ENCODE measurements at regions of chr7 and their contacts with region 1.

Region 1: DNA sequence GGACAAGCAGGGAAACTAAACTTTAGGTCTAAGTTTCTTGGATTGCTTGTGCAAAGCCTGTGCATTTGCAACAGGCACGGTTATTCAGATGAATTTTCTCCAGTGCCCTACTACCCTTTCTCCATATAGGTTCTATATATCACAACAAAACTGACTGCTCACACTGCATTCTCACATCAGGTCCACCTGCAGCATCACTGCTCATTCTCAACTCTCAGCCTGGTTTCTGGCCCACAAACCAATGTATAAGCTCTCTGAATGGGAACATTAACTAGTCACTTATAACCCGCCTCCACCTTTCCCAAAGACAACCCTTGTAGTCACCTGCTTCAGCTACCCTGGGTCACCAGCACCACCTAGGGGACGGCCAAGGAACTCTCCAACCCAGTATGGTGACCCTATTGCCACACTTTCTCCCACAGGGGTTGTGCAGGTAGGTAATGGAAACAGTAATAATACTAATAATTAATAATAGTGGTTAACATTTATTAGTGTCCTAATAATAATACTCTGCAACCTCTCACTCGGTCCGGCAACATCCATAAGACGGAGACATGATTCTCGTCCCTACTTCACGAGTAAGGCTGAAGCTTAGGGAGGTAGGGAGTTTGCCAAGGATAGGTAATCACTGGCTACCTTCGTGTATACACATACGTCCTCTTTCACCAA is 97.3 kb downstream of the CLEC2L start:
- DNase-seq: peak; percentile 41
- H3K4me3 ChIP-seq: no peak overlapping the region
- H3K27ac ChIP-seq: no peak overlapping the region
- H3K4me1 ChIP-seq: no peaks in the 10 kb centered on the region
- CTCF ChIP-seq: peak; percentile 87

Region 2: GRCh38 chr7:138603549-138604318 is 1017.1 kb before region 1 on chr7:
- CTCF ChIA-PET with region 1: no interaction called
- POLR2A ChIA-PET with region 1: no interaction called
- intact Hi-C with region 1: no loop called
- DNase-seq: no peak
- H3K4me3 ChIP-seq: no peak overlapping the region
- H3K27ac ChIP-seq: no peak overlapping the region
- H3K4me1 ChIP-seq: no peaks in the 10 kb centered on the region
- CTCF ChIP-seq: no peak

Region 3: DNA sequence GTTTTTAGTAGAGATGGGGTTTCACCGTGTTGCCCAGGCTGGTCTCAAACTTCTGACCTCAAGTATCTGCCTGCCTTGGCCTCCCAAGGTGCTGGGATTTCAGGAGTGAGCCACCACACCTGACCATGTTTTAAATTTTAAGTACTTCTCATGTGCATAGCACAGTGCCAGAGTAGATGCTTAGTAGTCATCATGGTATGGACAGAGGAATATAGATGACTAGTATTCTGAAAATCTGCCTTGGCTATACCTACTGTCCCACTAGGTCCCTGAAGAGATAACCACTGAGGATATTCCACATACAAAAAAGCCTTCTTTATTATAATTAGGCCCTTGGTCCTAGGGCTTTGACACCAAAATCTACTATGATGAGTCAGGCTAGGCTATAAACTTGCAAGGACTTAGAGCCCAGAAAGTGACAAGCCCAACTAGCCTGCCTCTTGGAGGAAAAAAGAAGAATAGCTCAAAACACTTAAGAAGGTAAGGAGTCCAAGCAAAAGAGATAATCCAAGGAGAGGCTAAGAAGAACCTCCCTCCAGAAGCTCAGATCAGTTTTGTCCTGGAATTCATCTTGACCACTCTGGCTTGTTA is 227.1 kb before region 1 on chr7:
- CTCF ChIA-PET with region 1: no interaction called
- POLR2A ChIA-PET with region 1: no interaction called
- intact Hi-C with region 1: no loop called
- DNase-seq: no peak
- H3K4me3 ChIP-seq: no peak overlapping the region
- H3K27ac ChIP-seq: no peak overlapping the region
- H3K4me1 ChIP-seq: no peaks in the 10 kb centered on the region
- CTCF ChIP-seq: no peak

Region 4: GRCh38 chr7:139505563-139505962 is 115.2 kb before region 1 on chr7:
- CTCF ChIA-PET with region 1: no interaction called
- POLR2A ChIA-PET with region 1: no interaction called
- intact Hi-C with region 1: loop called (anchors 10 kb)
- DNase-seq: peak; percentile 16
- H3K4me3 ChIP-seq: no peak overlapping the region
- H3K27ac ChIP-seq: no peak overlapping the region
- H3K4me1 ChIP-seq: no peaks in the 10 kb centered on the region
- CTCF ChIP-seq: peak; percentile 55